Aorta (tissue), 5 donors: ENCODE measurements at regions of chr18 and their contacts with region 1.

Region 1: GRCh38 chr18:35132021-35132902 is 91.0 kb downstream of the MAPRE2 start:
- DNase-seq: no peak
- ATAC-seq: no peak
- H3K4me3 ChIP-seq: no peak overlapping the region
- H3K27ac ChIP-seq: no peak overlapping the region
- H3K4me1 ChIP-seq: no peaks in the 10 kb centered on the region
- H3K27me3 ChIP-seq: no peaks in the 10 kb centered on the region

Region 2: GRCh38 chr18:35019933-35020332 is 112.3 kb before region 1 on chr18:
- intact Hi-C with region 1: loop called in 1 of 2 experiments (anchors 5 kb)
- DNase-seq: no peak
- ATAC-seq: no peak
- H3K4me3 ChIP-seq: no peak overlapping the region
- H3K27ac ChIP-seq: no peak overlapping the region
- H3K4me1 ChIP-seq: no peaks in the 10 kb centered on the region
- H3K27me3 ChIP-seq: no peaks in the 10 kb centered on the region